ENCODE measurements at regions of chrX and their contacts with region 1.

Region 1: GRCh38 chrX:115174548-115174947 is 14.7 kb upstream of the RBMXL3 start:
- DNase-seq: no peak
- ATAC-seq: no peak
- H3K4me3 ChIP-seq: no peak overlapping the region
- H3K27ac ChIP-seq: no peak overlapping the region
- H3K4me1 ChIP-seq: no peaks in the 10 kb centered on the region
- H3K27me3 ChIP-seq: peaks cover 0 to 3% (median 0%) of the 10 kb centered on the region in 3 donors
- CTCF ChIP-seq: no peak
- POLR2A ChIP-seq: no peak

Region 2: DNA sequence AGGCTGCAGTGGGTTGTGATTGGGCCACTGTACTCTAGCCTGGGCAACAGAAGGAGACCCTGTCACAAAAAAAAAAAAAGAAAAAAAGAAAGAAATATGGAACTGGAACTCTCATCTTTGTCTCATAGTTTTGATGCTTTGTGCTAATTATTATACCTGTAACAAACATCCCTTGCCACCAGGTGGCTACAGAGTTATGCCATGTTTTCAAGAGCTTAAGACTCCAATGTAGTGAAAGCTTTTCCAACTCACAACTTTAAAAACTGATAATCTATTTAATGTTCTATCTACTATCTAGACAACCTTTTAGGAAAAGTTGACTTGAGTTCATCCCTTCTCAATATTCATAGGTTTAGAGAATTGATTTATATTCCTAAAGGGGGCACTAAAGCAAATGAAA is 548.2 kb before region 1 on chrX:
- in situ Hi-C with region 1: loop called in 1 of 4 experiments (anchors 25 kb)
- intact Hi-C with region 1: no loop called
- DNase-seq: no peak
- ATAC-seq: no peak
- H3K4me3 ChIP-seq: no peak overlapping the region
- H3K27ac ChIP-seq: no peak overlapping the region
- H3K4me1 ChIP-seq: no peaks in the 10 kb centered on the region
- H3K27me3 ChIP-seq: no peaks in the 10 kb centered on the region
- CTCF ChIP-seq: peak in 1 of 5 experiments; percentile 26
- POLR2A ChIP-seq: no peak